Gastrocnemius medialis (tissue), 4 donors: ENCODE measurements at regions of chr17 and their contacts with region 1.

Region 1: DNA sequence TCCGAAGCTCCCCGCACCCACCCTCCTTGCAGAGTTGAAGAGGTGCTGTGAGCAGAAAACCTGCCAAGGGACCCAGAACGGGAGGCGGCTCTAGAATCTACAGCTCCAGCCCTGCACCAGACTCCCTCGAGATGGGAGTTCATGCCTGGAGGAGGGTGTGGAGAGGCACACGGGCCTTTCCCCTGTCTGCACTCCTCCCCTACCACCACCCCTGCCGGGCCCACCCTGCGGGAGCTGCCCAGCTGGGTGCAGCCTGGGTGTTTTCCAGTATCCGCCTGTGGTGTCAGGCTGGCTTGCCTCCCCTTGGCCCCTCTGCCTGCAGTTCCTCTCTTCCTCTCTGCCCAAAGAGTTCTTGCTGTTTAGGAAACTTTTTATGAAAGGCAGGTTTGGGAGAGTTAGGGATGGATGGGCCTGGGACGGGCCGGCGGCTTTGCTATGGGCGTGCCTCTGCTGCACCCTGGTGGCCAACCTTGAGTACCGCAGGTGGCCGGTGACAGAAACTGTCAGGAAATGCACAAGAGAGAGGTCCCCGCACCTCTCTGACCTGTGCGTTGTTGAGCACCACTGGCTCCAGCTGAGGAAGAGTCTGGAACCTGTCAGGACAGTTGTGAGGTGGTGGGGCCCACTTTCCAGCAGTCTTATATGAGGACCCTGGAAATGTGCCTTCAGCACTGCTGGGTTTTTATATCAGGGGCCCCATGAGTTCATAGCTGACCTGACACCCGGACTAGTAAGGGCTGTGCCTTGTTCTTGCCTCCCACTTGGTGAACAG is 354.1 kb downstream of the SEC14L1 start:
- DNase-seq: peak; percentile 57 to 65
- ATAC-seq: peak; percentile 58 to 60
- H3K4me3 ChIP-seq: no peak overlapping the region
- H3K27ac ChIP-seq: peak overlapping the region in 1 of 4 donors; percentile 33
- H3K4me1 ChIP-seq: peaks cover 11 to 12% of the 10 kb centered on the region in 2 donors
- H3K27me3 ChIP-seq: no peaks in the 10 kb centered on the region
- CTCF ChIP-seq: peak; percentile 97 to 99 (median 99)
- POLR2A ChIP-seq: no peak

Region 2: GRCh38 chr17:77088455-77089123 is 406.3 kb before region 1 on chr17:
- in situ Hi-C with region 1: no loop called
- intact Hi-C with region 1: loop called (anchors 10 kb)
- DNase-seq: peak; percentile 87 to 89
- ATAC-seq: peak; percentile 96
- H3K4me3 ChIP-seq: peak overlapping the region; percentile 73 to 85 (median 76)
- H3K27ac ChIP-seq: peak overlapping the region; percentile 89 to 94 (median 90)
- H3K4me1 ChIP-seq: peaks cover 30 to 32% of the 10 kb centered on the region in 2 donors
- H3K27me3 ChIP-seq: no peaks in the 10 kb centered on the region
- CTCF ChIP-seq: peak; percentile 73 to 89 (median 78)
- POLR2A ChIP-seq: peak; percentile 81 to 82

Region 3: DNA sequence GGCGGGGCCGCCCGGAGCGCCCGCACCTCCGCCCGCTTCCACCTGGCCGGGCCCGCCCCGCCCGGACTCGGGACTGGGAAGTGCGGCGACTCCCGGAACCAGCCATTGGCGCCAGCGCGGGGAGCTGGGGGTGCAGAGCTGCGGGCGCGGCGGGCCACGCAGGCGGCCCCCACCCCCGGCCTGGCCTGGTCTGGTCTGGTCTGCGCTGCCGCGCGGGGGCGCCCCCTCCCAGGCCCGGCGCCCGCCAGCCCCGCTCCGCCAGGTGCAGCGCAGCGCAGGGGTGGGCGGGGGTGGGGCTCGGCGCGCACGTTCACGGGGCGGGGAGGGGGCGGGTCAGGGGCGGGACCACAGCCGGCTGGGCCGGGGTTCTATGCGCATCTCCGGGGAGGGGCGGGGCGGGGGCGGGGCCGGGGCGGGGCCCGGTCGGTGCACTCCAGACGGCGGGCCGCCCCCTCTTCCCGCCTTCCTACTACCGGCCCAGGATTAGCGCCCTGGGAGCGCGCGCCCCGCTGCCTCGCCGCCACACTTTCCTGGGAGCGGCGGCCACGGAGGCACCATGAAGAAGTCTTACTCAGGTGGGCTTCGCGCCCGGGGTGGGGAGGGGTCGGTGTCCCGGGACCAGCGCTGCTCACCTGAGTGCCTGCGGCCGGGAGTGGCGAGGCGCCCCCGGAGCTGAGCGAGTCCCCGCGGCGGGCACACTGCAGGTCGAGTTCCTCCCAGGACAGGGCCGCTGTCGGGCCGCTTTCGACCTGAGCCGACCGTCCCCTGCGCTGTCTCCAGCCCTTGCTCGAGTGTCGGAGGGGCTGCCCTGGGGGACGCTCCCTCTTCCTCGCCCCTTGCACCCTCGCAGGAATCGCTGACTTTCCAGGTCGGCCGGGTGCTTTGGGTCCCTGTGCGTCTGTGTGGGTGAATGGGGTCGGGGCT is 213.6 kb before region 1 on chr17:
- in situ Hi-C with region 1: no loop called
- intact Hi-C with region 1: loop called (anchors 2 kb)
- DNase-seq: peak in 1 of 2 donors; percentile 53
- ATAC-seq: peak; percentile 80 to 84
- H3K4me3 ChIP-seq: peak overlapping the region; percentile 63 to 70 (median 68)
- H3K27ac ChIP-seq: peak overlapping the region in 3 of 4 donors; percentile 47 to 64 (median 51)
- H3K4me1 ChIP-seq: peaks cover 26 to 28% of the 10 kb centered on the region in 2 donors
- H3K27me3 ChIP-seq: peaks cover 0 to 3% (median 0%) of the 10 kb centered on the region in 3 donors
- CTCF ChIP-seq: peak in 3 of 5 experiments; percentile 57 to 66 (median 59)
- POLR2A ChIP-seq: peak in 1 of 2 donors; percentile 26

Region 4: GRCh38 chr17:77325577-77326075 is 169.2 kb before region 1 on chr17:
- in situ Hi-C with region 1: loop called in 3 of 4 experiments (anchors 5 kb)
- intact Hi-C with region 1: no loop called
- DNase-seq: no peak
- ATAC-seq: no peak
- H3K4me3 ChIP-seq: no peak overlapping the region
- H3K27ac ChIP-seq: peak overlapping the region; percentile 82 to 91 (median 88)
- H3K4me1 ChIP-seq: peaks cover 44 to 57% of the 10 kb centered on the region in 2 donors
- H3K27me3 ChIP-seq: no peaks in the 10 kb centered on the region
- CTCF ChIP-seq: no peak
- POLR2A ChIP-seq: no peak

Region 5: DNA sequence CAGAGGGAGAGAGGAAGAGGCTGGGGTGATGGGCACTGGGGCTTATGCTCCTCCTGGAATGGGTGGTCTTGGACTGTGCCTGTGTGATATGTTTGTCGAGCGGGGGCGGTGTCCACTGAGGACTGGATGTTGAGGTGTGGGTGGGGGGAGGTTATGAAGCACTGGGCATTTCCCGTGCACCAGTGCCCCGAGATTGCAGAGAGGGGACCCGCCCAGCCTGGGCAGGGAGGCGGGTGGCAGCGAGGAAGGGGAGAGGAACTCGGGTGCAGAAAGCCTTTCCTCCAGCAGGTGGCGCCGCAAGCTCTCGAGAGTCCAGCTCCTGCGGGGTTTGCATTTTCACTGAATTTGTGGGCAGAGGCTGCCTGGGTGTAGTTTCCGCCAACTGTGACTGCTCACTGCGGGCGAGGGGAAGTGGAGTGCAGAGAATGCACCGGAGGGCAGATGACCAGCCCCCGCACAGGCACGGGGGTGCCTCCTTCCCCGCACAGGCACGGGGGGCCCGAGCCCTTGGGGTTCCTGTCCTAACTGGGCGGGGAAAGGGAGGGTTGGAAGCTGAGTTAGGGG is 163.5 kb before region 1 on chr17:
- in situ Hi-C with region 1: loop called in 3 of 4 experiments (anchors 5 kb)
- intact Hi-C with region 1: loop called (anchors 1 kb)
- DNase-seq: peak; percentile 86
- ATAC-seq: peak; percentile 74 to 84
- H3K4me3 ChIP-seq: peak overlapping the region; percentile 26 to 42 (median 34)
- H3K27ac ChIP-seq: peak overlapping the region in 3 of 4 donors; percentile 51 to 61 (median 54)
- H3K4me1 ChIP-seq: peaks cover 17 to 37% of the 10 kb centered on the region in 2 donors
- H3K27me3 ChIP-seq: no peaks in the 10 kb centered on the region
- CTCF ChIP-seq: peak; percentile 87 to 97 (median 96)
- POLR2A ChIP-seq: no peak

Region 6: DNA sequence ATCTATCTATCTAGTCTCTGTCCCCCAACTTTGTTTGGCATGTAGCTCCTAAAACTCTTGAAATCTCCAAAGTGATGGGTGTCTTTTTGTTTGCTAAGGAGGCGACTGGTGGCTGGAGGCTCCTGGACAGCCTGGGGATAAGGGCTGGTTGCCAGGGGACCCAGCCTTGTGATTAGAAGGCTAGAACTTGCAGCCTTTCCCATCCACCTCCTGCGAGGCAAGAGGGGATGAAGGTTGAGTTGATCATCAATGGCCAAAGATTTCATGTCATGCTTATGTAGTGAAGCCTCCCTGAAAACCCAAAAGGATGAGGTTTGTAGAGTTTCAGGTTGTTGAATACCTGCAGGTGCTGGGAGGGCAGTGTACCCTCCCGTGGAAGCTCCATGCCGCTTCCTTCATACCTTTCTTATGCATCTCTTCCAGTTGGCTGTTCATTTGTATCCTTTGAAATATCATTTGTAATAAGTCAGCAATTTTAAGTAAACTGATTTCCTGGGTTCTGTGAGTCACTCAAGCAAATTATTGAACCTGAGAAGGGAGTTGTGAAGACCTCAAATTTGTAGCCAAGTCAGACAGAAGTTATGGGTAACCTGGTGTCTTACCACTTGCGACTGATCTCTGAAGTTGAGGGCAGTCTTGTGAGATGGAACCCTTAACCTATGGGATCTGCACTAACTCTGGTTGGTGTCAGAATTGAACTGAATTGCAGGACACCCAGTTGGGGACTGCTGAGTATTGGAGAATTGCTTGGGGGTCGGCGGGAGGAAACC is 151.6 kb before region 1 on chr17:
- in situ Hi-C with region 1: loop called in 1 of 4 experiments (anchors 5 kb)
- intact Hi-C with region 1: no loop called
- DNase-seq: no peak
- ATAC-seq: no peak
- H3K4me3 ChIP-seq: no peak overlapping the region
- H3K27ac ChIP-seq: no peak overlapping the region
- H3K4me1 ChIP-seq: peaks cover 7 to 25% of the 10 kb centered on the region in 2 donors
- H3K27me3 ChIP-seq: no peaks in the 10 kb centered on the region
- CTCF ChIP-seq: no peak
- POLR2A ChIP-seq: no peak

Region 7: DNA sequence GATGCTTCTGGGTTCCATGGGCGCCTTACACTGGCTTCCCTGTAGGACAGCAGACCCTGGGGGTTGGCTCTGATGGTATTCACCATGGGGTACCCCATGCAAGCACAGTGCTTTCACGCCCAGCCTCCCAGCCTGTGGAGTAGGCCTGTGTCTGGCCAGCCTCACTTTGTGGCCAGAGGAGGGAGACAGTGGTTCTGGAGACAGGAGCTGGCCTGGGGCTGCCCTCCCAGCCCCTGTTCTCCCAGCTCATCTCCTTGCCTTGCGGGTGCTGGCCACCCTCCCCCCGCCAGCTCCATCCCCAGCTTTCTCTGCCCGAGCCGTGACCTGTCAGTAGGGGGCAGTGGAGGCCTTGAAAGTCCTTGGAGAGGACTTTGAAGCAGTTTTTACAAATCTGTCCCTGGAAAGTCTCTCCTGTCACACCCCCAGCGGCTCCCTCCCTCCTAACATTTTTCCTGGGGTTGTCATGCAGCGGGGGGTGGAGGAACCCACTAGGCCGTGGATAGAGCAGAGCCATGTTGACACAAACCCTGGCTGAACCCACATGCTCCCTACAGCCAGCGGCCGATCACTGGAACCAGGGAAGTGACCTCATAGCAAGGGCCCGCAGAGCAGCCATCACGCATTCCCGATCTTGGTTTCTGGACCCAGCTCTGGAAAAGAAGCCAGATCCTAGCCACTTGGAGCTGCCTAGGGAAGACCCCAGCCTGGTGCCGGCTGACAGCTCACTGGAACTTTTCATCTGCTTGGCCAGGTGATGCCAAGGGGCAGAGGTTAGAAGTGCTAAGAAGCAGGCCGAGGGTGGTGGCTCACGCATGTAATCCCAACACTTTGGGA is 64.7 kb before region 1 on chr17:
- in situ Hi-C with region 1: loop called in 3 of 4 experiments (anchors 5 to 10 kb)
- intact Hi-C with region 1: loop called (anchors 1 kb)
- DNase-seq: peak; percentile 70 to 87
- ATAC-seq: peak; percentile 55 to 69
- H3K4me3 ChIP-seq: no peak overlapping the region
- H3K27ac ChIP-seq: peak overlapping the region; percentile 56 to 92 (median 76)
- H3K4me1 ChIP-seq: peaks cover 63 to 80% of the 10 kb centered on the region in 2 donors
- H3K27me3 ChIP-seq: no peaks in the 10 kb centered on the region
- CTCF ChIP-seq: peak; percentile 60 to 83 (median 80)
- POLR2A ChIP-seq: no peak